ENCODE measurements at regions of chr22 and their contacts with region 1.

Region 1: DNA sequence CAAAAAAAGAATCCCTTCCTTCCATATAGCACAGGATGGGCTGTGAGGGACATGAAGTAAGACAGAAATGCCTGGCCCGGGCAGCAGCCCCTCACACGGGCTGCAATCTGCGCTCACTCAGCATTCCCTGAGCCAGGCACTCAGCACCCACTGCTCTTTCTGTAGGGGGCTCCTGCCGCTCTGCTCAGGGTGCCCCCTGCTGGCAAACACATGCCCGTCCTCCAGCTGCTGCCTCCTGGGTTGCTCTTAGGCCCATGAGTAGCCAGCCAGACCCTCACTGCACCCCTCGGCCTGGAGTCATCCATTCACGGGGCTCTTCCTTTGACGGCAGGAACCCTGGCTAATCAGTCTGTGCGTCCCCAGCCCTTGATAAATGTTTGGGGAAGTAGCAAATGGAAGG is 6.9 kb downstream of the MCAT start:
- DNase-seq: peak; percentile 14
- ATAC-seq: 0 out of 2 replicates have a peak, but pooled peaks have one; percentile 40
- H3K4me3 ChIP-seq: no peak overlapping the region
- H3K27ac ChIP-seq: no peak overlapping the region
- H3K4me1 ChIP-seq: no peaks in the 10 kb centered on the region
- H3K27me3 ChIP-seq: no peaks in the 10 kb centered on the region
- CTCF ChIP-seq: peak; percentile 67

Region 2: DNA sequence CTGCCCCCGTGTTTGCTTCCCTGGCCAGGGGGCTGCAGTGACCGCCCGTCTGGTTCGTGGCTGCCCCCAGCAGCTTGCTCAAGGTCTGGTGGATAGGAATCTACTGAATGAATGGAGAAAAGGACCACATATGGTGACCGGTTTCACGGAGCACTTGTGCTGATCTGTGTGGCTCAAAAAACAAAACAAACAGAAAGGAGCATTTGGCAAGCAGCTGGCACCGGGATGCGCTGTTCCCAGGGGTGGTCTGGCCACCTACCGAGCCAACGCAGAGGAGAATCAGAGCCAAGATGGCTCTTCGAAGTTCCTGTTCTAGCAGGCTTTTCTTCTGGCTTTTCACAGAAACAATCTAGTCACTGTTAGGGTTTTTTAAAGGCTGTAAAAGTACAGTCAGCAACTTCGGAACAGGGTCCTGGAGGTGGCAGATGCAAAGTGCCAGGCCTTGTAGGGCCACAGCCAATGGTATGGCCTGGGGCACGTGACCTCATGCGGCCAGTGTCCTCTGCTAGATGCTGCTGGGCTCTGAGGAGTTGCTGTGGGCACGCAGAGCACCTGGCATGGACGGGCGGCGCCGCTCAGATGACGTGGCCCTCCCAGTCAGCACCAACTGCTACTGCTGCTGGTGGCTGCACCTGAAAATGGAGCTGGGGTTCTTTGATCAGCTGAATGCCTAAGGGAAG is 94.0 kb before region 1 on chr22:
- CTCF ChIA-PET with region 1: no interaction called
- POLR2A ChIA-PET with region 1: interaction called, 12 read pairs
- intact Hi-C with region 1: no loop called
- DNase-seq: no peak
- ATAC-seq: no peak
- H3K4me3 ChIP-seq: no peak overlapping the region
- H3K27ac ChIP-seq: no peak overlapping the region
- H3K4me1 ChIP-seq: no peaks in the 10 kb centered on the region
- H3K27me3 ChIP-seq: no peaks in the 10 kb centered on the region
- CTCF ChIP-seq: no peak

Region 3: DNA sequence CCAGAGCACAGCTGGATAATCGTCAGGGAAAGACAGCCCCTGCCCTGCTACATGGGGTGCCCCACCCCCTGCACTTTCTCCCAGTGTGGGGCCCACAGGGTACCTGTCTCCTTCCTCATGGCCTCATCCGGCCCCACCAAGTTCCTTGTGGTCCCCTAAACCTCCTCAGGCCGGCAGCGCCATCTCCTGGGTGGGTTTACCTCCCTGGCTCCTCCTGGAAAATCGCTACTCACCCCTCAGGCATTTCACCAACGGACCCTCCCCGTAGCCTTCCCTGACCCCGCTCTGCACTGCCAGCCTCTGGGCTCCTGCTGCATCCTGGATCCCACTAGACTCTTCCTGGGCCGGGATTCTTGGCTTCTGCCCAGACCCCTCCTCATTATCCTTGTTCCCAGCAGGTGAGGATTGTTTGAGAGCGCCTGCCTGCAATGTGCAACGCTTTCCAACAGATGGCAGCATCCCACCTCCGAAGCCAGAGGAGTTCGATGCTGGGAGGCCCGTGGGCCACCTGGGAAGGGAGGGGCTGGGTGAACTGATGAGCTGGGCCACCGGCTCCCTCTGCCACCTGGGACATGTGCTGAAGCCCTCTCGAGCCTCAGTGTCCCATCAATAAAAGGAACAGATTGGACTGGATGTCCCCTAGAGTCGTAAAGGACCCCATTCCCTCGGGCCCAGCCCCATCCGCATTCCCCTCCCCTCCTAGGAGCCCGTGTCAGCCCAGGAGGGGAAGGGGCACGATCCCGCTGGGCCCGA is 94.9 kb after region 1 on chr22:
- CTCF ChIA-PET with region 1: interaction called, 24 read pairs
- POLR2A ChIA-PET with region 1: no interaction called
- intact Hi-C with region 1: no loop called
- DNase-seq: peak; percentile 76
- ATAC-seq: peak; percentile 73
- H3K4me3 ChIP-seq: no peak overlapping the region
- H3K27ac ChIP-seq: no peak overlapping the region
- H3K4me1 ChIP-seq: no peaks in the 10 kb centered on the region
- H3K27me3 ChIP-seq: no peaks in the 10 kb centered on the region
- CTCF ChIP-seq: peak; percentile 90

Measured in PC-3 (cell line).